ENCODE measurements at regions of chr2 and their contacts with region 1.

Region 1: DNA sequence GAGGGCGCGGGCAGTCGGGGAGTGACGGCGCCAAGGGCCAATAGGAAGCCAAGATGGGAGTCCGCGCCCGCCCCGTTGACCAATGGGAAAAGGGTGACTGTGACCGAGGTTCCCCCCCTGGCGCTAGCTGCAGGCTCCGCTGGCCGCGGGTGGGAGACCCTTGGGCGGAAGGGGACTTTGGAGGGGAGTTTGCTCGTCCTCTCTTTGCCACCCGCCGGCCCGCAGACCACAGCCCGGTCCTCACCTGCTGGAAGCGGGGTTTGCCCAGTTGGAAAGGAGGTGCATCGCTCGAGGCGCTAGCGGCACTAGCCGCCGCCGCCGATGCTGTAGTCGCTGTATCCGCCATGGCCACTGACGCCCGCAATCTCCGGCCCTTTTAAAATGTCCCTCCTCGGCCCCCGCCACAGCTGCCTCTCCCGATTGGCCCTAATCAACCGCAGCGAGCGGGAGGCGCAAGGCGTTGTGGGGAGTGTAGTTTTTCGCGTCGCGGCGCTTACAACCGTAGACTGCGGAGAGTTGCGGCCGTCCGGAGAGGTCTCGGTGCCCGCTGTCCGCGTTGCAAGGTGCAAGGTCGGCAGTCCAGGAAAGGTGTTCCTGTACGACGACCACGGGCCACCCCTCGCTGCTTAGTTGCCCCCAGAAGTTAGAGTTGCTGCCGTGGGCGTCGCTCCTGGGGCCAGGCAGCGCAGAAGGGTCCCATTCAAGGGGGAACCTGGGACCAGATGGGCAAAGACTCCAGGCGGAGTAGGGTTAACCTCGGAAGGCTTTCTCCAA is at the start of gene SFXN5:
- DNase-seq: peak; percentile 100
- ATAC-seq: peak; percentile 97
- total RNA-seq, gene SFXN5: 9.6 TPM

Region 2: GRCh38 chr2:72980535-72981217 is 90.9 kb before region 1 on chr2:
- intact Hi-C with region 1: loop called (anchors 5 kb)
- DNase-seq: no peak
- ATAC-seq: no peak